ENCODE measurements at regions of chr22 and their contacts with region 1.

Region 1: DNA sequence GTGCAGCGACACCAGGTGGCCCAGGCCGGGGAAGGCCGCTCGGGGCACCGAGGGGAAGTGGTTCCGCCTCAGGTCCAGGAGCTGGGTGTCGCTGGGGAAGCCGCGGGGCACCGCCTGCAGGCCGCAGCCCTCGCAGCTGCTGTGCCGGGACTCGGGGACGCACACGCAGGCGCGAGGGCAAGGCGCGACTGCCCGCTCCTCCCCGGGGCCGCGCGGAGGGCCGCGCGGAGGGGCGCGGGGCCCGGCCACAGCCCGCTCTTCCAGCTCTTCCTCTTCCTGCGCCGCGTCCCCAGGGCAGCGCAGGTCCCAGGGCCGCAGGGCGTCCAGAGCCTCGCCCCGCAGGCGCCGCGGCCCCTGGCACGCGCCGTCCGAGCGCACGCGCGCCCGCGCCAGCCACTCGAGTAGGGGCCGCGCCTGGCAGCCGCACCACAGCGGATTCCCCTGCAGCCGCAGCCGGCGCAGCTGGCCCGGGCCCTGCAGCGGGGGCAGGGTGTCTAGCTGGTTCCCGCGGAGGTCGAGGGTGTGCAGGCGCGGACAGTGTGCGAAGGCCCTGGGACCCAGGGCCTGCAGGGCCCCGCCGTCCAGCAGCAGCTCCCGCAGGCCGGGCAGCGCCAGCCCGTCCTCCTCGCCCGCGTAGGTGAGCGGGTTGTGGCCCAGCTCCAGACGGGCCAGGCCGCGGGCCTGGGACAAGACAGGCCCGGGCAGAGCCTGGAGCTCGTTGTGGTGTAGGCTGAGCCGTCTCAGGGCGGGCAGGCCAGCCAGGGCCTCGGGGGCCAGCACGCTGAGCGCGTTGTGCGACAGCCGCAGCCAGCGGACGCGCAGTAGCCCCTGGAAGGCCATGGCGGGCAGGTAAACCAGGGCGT is 2.8 kb downstream of the CHADL start:
- DNase-seq: peak; percentile 78
- ATAC-seq: peak; percentile 97
- H3K4me3 Mint-ChIP-seq: peak overlapping the region; percentile 64
- H3K27ac Mint-ChIP-seq: no peak overlapping the region
- H3K4me1 Mint-ChIP-seq: peaks cover 8% of the 10 kb centered on the region
- H3K27me3 Mint-ChIP-seq: no peaks in the 10 kb centered on the region
- CTCF ChIP-seq: no peak

Region 2: GRCh38 chr22:41301105-41302020 is 63.4 kb after region 1 on chr22 and contains the start of gene ZC3H7B:
- CTCF ChIA-PET with region 1: interaction called, 7 read pairs
- POLR2A ChIA-PET with region 1: interaction called, 12 read pairs
- intact Hi-C with region 1: no loop called
- DNase-seq: peak; percentile 74
- ATAC-seq: peak; percentile 93
- H3K4me3 Mint-ChIP-seq: peak within 1 kb of the TSS; percentile 83
- H3K27ac Mint-ChIP-seq: peak within 1 kb of the TSS; percentile 92
- H3K4me1 Mint-ChIP-seq: peaks cover 30% of the 10 kb centered on the region
- H3K27me3 Mint-ChIP-seq: no peaks in the 10 kb centered on the region
- CTCF ChIP-seq: no peak
- total RNA-seq, gene ZC3H7B: 54.0 and 58.2 TPM in 2 replicates

Region 3: DNA sequence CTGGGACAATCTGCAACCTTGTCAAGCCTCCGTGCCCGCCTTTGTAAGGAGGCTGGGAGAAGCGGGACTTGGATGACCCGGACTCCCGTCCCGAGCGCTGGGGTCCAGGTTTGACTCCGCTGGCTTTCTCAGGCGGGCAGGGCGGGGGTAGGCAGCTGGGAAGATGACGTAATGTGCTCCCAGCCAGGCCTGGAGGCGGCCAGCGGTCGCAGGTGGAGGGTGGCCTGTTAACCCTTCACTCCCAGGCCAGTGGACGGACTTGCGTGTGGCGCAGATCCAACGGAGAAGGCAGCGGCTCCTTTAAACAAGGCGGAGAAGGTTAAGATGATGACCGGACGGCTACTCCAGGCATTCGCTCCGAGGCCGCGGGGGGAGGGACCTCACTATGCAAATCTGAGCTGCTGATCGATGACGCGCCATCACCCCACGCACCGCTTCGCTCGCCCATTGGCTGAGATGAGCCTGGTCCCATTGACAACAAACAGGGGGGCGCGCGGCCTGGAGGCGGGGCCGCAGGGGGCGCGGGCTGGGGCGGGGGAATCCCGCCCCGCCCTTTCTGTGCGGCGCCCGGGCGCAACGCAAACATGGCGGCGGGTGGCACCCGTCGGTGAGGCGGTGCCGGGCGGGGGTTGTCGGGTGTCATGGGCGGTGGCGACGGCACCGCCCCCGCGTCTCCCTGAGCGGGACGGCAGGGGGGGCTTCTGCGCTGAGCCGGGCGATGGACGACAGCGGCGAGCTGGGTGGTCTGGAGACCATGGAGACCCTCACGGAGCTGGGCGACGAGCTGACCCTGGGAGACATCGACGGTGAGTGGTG is 594.8 kb after region 1 on chr22 and contains the start of gene SREBF2:
- CTCF ChIA-PET with region 1: no interaction called
- POLR2A ChIA-PET with region 1: no interaction called
- intact Hi-C with region 1: no loop called
- DNase-seq: peak; percentile 96
- ATAC-seq: peak; percentile 85
- H3K4me3 Mint-ChIP-seq: peak within 1 kb of the TSS; percentile 98
- H3K27ac Mint-ChIP-seq: peak within 1 kb of the TSS; percentile 99
- H3K4me1 Mint-ChIP-seq: peaks cover 62% of the 10 kb centered on the region
- H3K27me3 Mint-ChIP-seq: no peaks in the 10 kb centered on the region
- CTCF ChIP-seq: no peak
- total RNA-seq, gene SREBF2: 253 and 307 TPM in 2 replicates